Activated CD8-positive, alpha-beta memory T cell treated with anti-CD3 and anti-CD28 coated beads, Interleukin-2, amount 10 ng/mL, durations not matched to agents 7 days and 5 days (primary cell): ENCODE measurements at regions of chr17 and their contacts with region 1.

Region 1: GRCh38 chr17:78360371-78361224 is 721 bp upstream of the SOCS3 start:
- DNase-seq: peak; percentile 94
- ATAC-seq: peak; percentile 38
- H3K4me3 Mint-ChIP-seq: peak overlapping the region; percentile 77
- H3K27ac Mint-ChIP-seq: peak overlapping the region; percentile 87
- H3K4me1 Mint-ChIP-seq: peaks cover 47% of the 10 kb centered on the region
- H3K27me3 Mint-ChIP-seq: peaks cover 12% of the 10 kb centered on the region

Region 2: GRCh38 chr17:78278139-78279127 is 82.2 kb before region 1 on chr17:
- CTCF ChIA-PET with region 1: no interaction called
- DNase-seq: no peak
- ATAC-seq: no peak
- H3K4me3 Mint-ChIP-seq: no peak overlapping the region
- H3K27ac Mint-ChIP-seq: no peak overlapping the region
- H3K4me1 Mint-ChIP-seq: peaks cover 7% of the 10 kb centered on the region
- H3K27me3 Mint-ChIP-seq: peaks cover 3% of the 10 kb centered on the region

Region 3: DNA sequence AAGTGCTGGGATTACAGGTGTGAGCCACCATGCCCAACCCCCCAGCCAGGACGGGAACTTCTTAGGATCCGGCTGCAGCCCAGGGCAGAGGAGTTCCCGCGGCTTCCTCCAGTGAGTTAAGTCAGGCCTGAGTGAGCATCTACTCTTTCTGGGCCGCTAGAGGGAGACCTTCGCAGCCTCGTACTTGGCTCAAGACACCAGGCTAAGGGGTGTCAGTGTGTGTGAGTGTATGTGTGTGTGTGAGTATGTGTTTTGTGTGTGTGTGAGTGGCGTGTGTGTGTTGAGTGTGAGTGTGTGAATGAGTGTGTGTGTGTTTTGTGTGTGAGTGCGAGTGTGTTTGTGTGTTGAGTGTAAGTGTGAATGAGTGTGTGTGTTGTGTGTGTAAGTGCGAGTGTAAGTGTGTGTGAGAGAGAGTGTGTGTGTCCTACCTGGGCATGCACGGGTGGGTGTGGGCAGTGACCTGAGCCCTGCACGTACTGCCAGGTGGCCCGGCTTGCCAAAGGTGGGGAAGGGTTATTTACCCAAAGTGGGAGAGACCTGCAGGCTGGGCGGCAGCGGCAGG is 70.7 kb before region 1 on chr17:
- CTCF ChIA-PET with region 1: interaction called, 12 read pairs
- DNase-seq: peak; percentile 84
- ATAC-seq: peak; percentile 99
- H3K4me3 Mint-ChIP-seq: no peak overlapping the region
- H3K27ac Mint-ChIP-seq: no peak overlapping the region
- H3K4me1 Mint-ChIP-seq: no peaks in the 10 kb centered on the region
- H3K27me3 Mint-ChIP-seq: no peaks in the 10 kb centered on the region

Region 4: GRCh38 chr17:78341559-78342448 is 18.8 kb before region 1 on chr17:
- CTCF ChIA-PET with region 1: interaction called, 38 read pairs
- DNase-seq: no peak
- ATAC-seq: peak; percentile 26
- H3K4me3 Mint-ChIP-seq: no peak overlapping the region
- H3K27ac Mint-ChIP-seq: no peak overlapping the region
- H3K4me1 Mint-ChIP-seq: peaks cover 26% of the 10 kb centered on the region
- H3K27me3 Mint-ChIP-seq: peaks cover 20% of the 10 kb centered on the region

Region 5: DNA sequence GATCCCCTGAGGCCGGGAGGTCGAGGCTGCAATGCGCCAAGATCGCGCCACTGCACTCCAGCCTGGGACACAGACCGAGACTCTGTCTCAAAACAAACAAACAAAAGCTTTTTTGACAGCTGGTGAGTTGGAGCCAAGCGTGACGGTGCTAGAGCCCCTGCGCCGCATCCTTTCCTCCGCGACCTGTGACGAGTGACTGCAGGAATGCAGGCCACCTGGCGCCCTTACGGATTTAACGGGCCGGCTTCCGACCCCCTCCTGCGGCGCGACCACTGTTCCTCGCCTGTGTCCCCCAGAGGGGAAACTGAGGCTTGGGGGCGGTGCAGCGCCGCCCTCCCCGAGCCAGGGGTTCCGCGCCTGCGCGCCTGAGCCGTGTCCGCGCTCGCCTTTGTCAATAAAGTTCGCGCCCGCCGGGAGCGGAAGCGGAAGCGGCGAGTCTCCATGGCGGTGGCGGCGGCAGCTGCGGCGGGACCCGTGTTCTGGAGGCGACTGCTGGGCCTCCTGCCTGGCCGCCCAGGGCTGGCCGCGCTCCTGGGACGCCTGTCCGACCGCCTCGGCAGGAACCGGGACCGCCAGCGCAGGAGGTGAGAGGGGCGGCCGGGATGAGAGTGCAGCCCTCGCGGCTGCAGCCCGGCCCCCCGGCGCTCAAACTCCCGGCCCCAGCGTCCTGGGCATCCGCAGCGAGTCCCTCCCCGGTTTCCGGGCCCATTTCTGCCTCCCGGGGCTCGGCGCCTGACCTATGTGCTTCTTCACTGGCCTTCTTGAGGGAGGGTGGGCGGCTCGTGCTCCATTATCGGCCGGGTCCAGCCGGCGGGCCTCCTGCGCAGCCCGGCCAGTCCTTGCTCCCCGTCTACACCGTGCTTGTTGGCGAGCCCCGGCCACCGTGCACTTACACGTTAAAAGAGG is 17.9 kb after region 1 on chr17 and contains the start of gene PGS1:
- CTCF ChIA-PET with region 1: interaction called, 73 read pairs
- DNase-seq: peak; percentile 89
- ATAC-seq: peak; percentile 67
- H3K4me3 Mint-ChIP-seq: peak within 1 kb of the TSS; percentile 89
- H3K27ac Mint-ChIP-seq: peak within 1 kb of the TSS; percentile 89
- H3K4me1 Mint-ChIP-seq: peaks cover 50% of the 10 kb centered on the region
- H3K27me3 Mint-ChIP-seq: peaks cover 3% of the 10 kb centered on the region
- total RNA-seq, gene PGS1: 52.2 to 70.2 TPM

Region 6: GRCh38 chr17:78421484-78422266 is 61.1 kb after region 1 on chr17:
- CTCF ChIA-PET with region 1: interaction called, 191 read pairs
- DNase-seq: peak; percentile 83
- ATAC-seq: peak; percentile 89
- H3K4me3 Mint-ChIP-seq: no peak overlapping the region
- H3K27ac Mint-ChIP-seq: no peak overlapping the region
- H3K4me1 Mint-ChIP-seq: peaks cover 25% of the 10 kb centered on the region
- H3K27me3 Mint-ChIP-seq: no peaks in the 10 kb centered on the region